ENCODE measurements at regions of chr6 and their contacts with region 1.

Region 1: GRCh38 chr6:41602864-41603608 is 35.2 kb upstream of the MDFI start:
- DNase-seq: no peak
- H3K4me3 ChIP-seq: no peak overlapping the region; the same call in 1 of the 2 replicates
- CTCF ChIP-seq: peak; percentile 95

Region 2: DNA sequence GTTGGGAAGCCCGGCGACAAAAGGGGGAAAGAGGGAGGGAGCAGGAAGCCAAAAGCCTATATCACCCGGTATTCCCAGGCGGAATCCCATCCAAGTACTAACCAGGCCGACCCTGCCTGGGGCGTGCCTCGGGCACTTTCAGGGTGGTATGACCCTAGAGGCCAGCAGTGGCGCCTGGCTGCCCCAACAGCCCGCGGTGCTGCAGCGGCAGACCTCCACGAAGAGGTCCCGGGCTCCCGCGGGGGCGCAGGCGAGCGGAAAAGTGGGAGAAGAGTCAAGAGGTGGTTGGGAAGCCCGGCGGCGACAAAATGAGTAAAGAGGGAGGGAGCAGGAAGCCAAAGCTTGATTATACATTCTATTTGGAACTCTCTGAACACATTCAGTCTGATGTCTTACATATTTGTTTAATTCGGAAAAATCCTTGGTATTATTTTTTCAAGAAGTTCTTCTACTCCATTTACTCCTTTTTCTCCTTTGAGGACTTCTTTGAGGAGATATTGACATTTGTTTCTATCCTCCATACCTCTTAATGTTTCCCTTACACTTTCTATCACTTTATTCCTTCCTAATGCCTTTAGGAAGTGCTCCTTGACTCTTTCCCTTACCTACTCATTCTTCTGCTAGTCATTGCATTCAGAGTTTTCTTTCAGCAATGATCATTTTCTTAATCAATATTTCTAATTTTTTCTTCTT is 363.4 kb before region 1 on chr6:
- CTCF ChIA-PET with region 1: no interaction called
- POLR2A ChIA-PET with region 1: no interaction called
- DNase-seq: no peak
- H3K4me3 ChIP-seq: no peak overlapping the region
- CTCF ChIP-seq: no peak

Region 3: DNA sequence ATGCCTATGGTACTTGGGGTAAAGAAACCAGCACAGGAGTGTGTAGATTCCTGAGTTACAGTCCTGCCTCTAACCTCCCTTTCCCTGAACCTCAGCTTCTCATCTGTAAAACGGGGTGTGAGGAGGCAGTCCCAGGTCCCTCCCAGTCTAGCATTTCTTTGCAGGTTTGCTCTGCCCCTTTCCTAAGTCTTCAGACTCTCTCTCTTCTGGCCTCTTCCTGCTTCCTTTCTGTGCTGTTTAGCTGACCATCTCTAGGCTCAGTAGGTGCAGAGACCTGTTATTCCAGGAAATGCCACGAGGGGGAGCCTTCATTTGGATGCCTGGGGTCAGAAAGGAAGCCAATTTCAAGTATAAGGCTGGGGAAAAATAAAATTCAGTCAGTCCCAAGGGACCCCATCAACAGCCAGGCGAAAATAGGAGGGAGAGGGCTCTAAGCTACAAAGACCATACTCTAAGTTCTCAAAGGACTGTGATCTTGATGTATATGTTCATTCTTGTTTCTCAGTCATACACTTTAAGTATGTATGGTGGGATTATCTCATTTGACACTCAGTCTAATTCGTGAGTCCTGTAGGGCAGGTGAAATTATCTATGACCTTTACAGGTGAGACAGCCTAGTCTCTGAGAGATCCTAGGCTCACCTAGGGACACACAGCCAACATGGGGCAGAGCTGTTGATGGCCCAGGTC is 178.5 kb before region 1 on chr6:
- CTCF ChIA-PET with region 1: interaction called, 146 read pairs
- POLR2A ChIA-PET with region 1: no interaction called
- DNase-seq: peak; percentile 19
- H3K4me3 ChIP-seq: no peak overlapping the region
- CTCF ChIP-seq: peak; percentile 85

Region 4: DNA sequence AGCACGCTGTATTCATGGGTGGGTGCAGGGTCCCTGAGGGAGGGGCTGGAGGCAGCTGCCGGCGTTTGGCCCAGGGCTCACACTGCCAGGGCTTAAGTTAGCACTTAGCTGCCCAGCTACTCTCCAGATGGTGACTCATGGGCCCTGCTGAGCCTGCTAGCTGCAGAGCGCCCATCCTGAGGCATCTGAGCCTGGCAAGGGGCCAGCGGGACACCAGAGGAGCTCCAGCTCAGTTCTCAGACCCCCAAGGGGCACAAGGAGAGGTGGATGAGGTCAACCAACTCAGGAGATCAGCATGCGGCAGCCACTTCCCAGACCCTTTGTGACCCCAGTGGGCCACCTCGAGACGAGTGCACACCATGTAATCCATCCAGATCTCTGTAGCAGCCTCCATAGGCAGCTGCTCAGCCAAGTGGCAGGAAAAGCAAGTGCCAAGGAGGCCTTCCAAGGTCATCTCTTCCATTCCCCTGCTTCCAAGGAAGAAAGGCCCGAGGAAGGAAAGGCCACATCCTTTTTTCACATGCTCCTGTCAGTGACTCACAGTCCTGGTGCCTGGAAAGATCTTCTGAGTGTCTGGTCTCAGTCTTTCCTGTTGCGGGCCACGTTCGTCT is 21.6 kb before region 1 on chr6:
- CTCF ChIA-PET with region 1: interaction called, 121 read pairs
- POLR2A ChIA-PET with region 1: no interaction called
- DNase-seq: no peak
- H3K4me3 ChIP-seq: no peak overlapping the region
- CTCF ChIP-seq: no peak

Region 5: GRCh38 chr6:41618091-41618490 is 15.1 kb after region 1 on chr6:
- CTCF ChIA-PET with region 1: interaction called, 18 read pairs
- POLR2A ChIA-PET with region 1: no interaction called
- DNase-seq: no peak
- H3K4me3 ChIP-seq: no peak overlapping the region
- CTCF ChIP-seq: no peak

Region 6: DNA sequence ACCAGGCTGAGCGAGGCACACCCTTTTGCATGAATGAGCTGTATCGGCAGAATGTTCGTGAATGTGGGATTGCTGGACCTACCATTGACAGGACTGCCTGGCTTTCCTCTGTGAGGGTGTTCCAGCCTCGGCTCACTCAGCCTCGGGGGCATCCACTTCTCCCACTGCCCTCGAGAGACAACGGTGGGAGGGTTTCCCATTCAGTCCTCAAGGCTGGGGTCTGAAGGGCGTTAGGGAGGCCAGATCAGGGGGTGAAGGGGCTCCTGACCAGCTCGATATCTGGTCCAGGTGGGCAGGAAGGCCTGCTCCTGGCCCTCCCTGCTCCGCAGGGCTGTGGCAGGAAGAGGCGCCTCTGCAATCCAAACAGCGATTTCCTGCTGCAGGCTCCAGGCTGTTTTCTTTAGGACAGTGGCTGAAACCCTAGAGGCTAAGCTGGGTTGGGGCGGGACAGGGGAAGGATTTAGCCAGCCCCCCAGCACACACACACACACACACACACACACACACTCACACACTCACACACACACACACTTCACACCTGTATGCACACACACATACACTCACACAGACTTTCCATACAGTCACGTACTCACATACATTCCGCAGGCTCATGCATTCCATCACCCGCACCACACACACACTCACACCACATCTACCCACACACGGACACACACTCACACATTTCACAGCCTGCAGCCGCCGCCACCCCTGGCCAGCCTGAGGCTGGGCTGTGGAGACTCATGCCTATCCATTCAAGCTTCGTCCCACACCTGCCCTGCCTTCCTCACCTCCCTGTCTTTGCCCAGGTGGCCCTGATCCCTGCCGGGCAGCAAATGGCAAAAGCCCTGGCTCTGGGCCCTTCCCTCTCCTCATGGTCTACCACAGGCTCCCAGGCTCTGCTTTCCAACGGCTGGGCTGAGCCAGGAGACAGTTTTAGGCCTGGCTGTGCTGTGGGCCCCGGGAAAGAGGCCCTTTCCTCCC is 53.0 kb after region 1 on chr6:
- CTCF ChIA-PET with region 1: interaction called, 15 read pairs
- POLR2A ChIA-PET with region 1: interaction called, 3 read pairs
- DNase-seq: peak; percentile 12
- H3K4me3 ChIP-seq: no peak overlapping the region
- CTCF ChIP-seq: no peak

Region 7: DNA sequence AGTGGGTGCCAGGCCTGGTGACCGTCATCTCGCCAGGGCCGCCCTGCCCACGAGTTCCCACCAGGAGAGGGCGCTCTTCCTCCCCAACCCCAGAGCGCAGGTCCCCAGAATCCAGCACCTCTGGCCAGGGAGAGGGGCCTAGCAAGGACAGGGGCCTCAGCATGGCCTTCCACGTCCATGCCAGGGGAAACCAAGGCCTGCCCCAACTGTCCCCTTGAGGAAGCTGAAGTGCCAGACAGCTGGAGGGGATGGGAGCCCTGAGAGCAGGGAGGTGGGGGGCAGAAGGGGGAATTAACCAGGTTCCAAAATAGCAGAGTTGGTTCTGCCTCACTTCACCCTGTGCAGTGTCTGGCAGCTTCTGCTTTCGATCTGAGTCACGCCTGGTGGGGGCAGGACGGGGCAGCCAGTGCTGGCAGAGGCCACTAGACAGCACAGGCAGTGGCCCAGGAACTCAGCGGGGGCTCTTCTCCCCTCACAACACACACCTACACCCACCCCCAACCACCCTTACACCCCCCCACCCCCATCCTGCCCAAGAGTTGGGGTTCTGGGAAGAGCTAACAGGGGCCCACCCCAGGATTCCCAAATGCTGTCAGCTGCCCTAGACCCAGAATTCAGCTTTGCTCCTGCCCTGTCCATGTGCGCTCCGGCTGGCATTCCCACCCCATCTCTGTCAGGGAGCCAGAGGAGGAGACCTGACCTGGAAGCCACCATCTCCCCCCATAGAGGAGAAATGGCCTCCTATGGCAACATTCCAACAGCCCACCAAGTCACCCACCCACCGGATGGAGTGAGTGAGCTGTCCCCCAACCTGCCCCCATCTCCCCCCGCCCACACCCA is 103.2 kb after region 1 on chr6:
- CTCF ChIA-PET with region 1: interaction called, 10 read pairs
- POLR2A ChIA-PET with region 1: no interaction called
- DNase-seq: no peak
- H3K4me3 ChIP-seq: no peak overlapping the region
- CTCF ChIP-seq: peak; percentile 76

Region 8: GRCh38 chr6:42043787-42044475 is 440.9 kb after region 1 on chr6:
- CTCF ChIA-PET with region 1: interaction called, 13 read pairs
- POLR2A ChIA-PET with region 1: no interaction called
- DNase-seq: no peak
- H3K4me3 ChIP-seq: no peak overlapping the region; the same call in 1 of the 2 replicates
- CTCF ChIP-seq: peak; percentile 94

Measured in AG04449 (cell line).